Sigmoid colon (tissue), 7 donors: ENCODE measurements at regions of chr14 and their contacts with region 1.

Region 1: GRCh38 chr14:34714320-34715126 is at the start of gene CFL2:
- DNase-seq: peak; percentile 93
- H3K4me3 ChIP-seq: peak within 1 kb of the TSS; percentile 85 to 99 (median 95)
- H3K27ac ChIP-seq: peak within 1 kb of the TSS; percentile 93 to 100 (median 99)
- H3K4me1 ChIP-seq: peaks cover 0 to 51% (median 38%) of the 10 kb centered on the region in 4 donors
- H3K27me3 ChIP-seq: no peaks in the 10 kb centered on the region
- CTCF ChIP-seq: no peak
- EP300 ChIP-seq: peak in 1 of 4 donors; percentile 1
- POLR2A ChIP-seq: peak; percentile 67 to 87
- total RNA-seq, gene CFL2: 251 to 380 (median 284) TPM

Region 2: DNA sequence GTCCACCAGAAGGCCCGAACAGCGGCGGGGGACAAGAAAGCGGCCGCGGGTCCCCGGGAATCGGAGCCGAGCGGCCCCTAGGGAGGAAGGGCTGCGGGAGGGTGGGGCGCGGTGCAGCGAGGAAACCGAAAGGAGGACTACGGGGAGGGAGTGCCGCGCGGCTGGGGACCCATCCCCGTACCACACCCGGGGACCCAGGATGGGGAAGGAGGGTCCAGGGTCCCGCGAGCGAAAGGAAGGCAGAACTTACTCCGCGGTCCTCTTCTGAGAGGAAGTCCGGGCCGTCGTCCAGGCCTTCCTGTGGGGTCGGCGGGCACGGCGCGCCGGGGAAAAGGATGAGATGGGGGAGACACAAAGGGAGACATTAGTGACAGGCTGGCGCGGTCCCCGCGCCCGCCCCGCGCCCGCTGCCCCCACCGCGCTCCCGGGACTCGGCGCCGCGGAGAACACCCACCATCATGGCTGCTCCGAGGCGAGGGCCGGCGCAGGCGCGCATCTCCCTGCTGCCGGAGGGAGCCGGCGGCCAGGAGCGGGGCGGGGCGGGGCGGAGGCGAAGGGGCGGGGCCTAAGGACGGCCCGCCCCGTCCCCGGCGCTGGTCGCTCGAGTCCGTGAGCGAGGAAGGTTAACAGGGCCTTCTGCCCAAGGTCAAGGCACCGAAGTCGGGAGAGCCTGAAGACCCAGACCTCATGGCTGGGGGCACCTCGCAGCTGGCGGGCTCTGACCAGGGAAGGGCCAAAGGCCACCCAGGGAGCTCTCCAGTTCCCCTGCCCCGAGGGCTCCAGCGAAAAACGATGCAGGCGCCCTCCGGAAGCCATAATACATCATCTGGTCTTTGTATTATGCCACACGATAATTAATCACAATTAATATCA is 84.6 kb before region 1 on chr14 and contains the start of gene SNX6:
- intact Hi-C with region 1: loop called (anchors 5 kb)
- DNase-seq: peak; percentile 92
- H3K4me3 ChIP-seq: peak within 1 kb of the TSS; percentile 70 to 96 (median 89)
- H3K27ac ChIP-seq: peak within 1 kb of the TSS; percentile 90 to 97 (median 94)
- H3K4me1 ChIP-seq: peaks cover 0 to 29% (median 25%) of the 10 kb centered on the region in 4 donors
- H3K27me3 ChIP-seq: no peaks in the 10 kb centered on the region
- CTCF ChIP-seq: no peak
- EP300 ChIP-seq: no peak
- POLR2A ChIP-seq: peak; percentile 60 to 61
- total RNA-seq, gene SNX6: 79.0 to 136 (median 108) TPM

Region 3: GRCh38 chr14:34662561-34663088 is 51.9 kb before region 1 on chr14:
- intact Hi-C with region 1: no loop called
- DNase-seq: no peak
- H3K4me3 ChIP-seq: no peak overlapping the region
- H3K27ac ChIP-seq: no peak overlapping the region
- H3K4me1 ChIP-seq: no peaks in the 10 kb centered on the region
- H3K27me3 ChIP-seq: no peaks in the 10 kb centered on the region
- CTCF ChIP-seq: no peak
- EP300 ChIP-seq: no peak
- POLR2A ChIP-seq: no peak

Region 4: DNA sequence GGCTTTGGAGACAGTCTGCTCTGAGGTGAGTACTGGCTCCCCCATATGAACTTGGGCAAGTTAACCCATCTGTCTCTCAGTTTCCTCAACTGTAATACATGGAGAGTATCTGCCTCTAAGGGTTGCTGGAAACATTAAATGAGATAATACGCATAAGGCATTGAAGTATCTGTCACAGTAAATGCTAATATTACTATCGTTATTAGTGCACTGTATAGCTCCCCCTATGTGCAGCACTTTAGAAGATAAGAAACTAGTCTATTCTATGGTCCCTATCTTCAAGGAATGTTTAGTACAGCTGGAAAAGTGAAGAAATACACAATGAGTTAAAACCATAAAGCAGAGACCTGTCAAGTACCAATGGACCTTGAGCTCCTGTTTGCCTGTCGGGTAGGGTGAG is 51.5 kb after region 1 on chr14:
- intact Hi-C with region 1: no loop called
- DNase-seq: no peak
- H3K4me3 ChIP-seq: no peak overlapping the region
- H3K27ac ChIP-seq: no peak overlapping the region
- H3K4me1 ChIP-seq: no peaks in the 10 kb centered on the region
- H3K27me3 ChIP-seq: no peaks in the 10 kb centered on the region
- CTCF ChIP-seq: no peak
- EP300 ChIP-seq: no peak
- POLR2A ChIP-seq: no peak

Region 5: DNA sequence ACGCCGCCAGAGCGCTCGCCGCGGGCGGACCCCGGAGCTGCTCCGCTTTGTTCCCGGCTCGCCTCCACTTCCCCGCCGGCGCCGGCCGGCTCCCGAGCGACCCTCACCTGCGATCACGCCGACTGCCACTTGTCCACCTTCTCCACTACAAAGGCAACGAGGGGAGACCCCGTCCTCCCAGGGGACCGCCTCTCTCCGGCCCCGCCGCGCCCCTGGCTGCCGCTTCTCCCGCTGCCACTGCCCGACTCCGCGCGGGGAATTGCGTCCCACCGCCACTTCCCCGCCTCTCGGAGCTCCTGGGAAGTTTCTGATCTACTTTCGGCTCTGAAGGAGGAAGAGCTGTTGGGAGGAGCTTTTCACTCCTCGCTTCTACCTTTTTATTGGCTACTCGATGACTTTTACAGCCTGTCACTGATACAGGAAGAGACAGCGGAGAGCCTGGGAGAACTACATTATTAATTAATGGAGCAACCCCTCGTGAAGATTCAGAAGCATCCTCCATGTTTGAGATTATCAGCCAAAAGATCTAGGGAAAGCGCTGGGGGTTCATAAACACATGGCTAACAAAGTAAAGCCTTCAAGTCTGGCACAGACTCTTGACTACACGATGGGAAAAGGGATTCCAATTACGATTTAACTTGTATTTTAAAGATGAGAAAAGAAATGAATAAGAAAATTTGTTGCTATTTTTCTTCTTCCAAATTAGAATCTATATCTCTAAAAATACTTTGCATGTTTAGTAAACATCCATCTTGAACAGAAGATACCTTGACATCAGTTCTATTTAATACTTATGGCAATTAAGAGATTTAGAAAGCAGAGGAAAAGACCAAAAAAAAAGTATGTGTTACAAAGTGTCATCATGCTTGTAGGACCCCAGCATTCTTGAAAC is 160.8 kb after region 1 on chr14 and contains the start of gene BAZ1A:
- intact Hi-C with region 1: loop called (anchors 2 kb)
- DNase-seq: peak; percentile 83
- H3K4me3 ChIP-seq: peak within 1 kb of the TSS; percentile 66 to 98 (median 92)
- H3K27ac ChIP-seq: peak within 1 kb of the TSS; percentile 97 to 99 (median 98)
- H3K4me1 ChIP-seq: peaks cover 0 to 13% (median 5%) of the 10 kb centered on the region in 4 donors
- H3K27me3 ChIP-seq: no peaks in the 10 kb centered on the region
- CTCF ChIP-seq: peak in 2 of 4 experiments; percentile 15 to 25
- EP300 ChIP-seq: no peak
- POLR2A ChIP-seq: peak; percentile 71 to 88
- total RNA-seq, gene BAZ1A: 18.2 to 25.2 (median 21.6) TPM

Region 6: GRCh38 chr14:34982417-34983147 is 268.1 kb after region 1 on chr14 and contains the start of gene SRP54:
- intact Hi-C with region 1: loop called (anchors 2 kb)
- DNase-seq: peak; percentile 100
- H3K4me3 ChIP-seq: peak within 1 kb of the TSS; percentile 70 to 88 (median 78)
- H3K27ac ChIP-seq: peak within 1 kb of the TSS; percentile 93 to 98 (median 94)
- H3K4me1 ChIP-seq: peaks cover 0 to 38% (median 34%) of the 10 kb centered on the region in 4 donors
- H3K27me3 ChIP-seq: no peaks in the 10 kb centered on the region
- CTCF ChIP-seq: no peak
- EP300 ChIP-seq: no peak
- POLR2A ChIP-seq: peak; percentile 75 to 85
- total RNA-seq, gene SRP54: 29.9 to 36.1 (median 34.6) TPM

Region 7: GRCh38 chr14:35121887-35122695 is 407.6 kb after region 1 on chr14 and contains the starts of genes PPP2R3C and PRORP:
- intact Hi-C with region 1: loop called (anchors 10 kb)
- DNase-seq: peak; percentile 96
- H3K4me3 ChIP-seq: peak within 1 kb of the TSS; percentile 68 to 70 (median 69)
- H3K27ac ChIP-seq: peak within 1 kb of the TSS; percentile 90 to 98 (median 94)
- H3K4me1 ChIP-seq: peaks cover 0 to 41% (median 26%) of the 10 kb centered on the region in 4 donors
- H3K27me3 ChIP-seq: no peaks in the 10 kb centered on the region
- CTCF ChIP-seq: no peak
- EP300 ChIP-seq: no peak
- POLR2A ChIP-seq: peak; percentile 45 to 70
- total RNA-seq, gene PPP2R3C: 25.3 to 44.3 (median 40.5) TPM
- total RNA-seq, gene PRORP: 7.9 to 17.1 (median 13.6) TPM